ENCODE measurements at regions of chr4 and their contacts with region 1.

Region 1: GRCh38 chr4:112492321-112492720 is 23.7 kb downstream of the NEUROG2 start:
- DNase-seq: no peak
- ATAC-seq: no peak

Region 2: DNA sequence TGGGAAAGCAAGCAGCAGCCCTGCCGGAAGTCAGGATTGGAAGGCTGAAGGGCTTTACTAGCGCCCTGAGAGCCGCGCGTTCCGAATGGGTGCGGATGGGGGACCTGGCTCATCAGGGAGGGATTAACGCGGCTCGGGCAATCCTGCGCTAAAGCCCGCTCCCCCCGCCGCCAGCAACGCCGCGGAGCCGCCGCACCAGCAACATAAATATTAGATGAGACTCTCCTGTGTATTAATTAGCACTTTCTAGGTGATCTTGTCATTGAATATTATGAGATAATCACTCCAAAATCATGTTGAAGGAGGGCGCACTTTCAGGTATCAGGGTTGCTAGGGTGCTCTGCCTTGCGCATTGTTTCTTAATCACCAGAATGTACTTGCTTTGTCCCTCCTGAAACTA is 704.2 kb before region 1 on chr4:
- intact Hi-C with region 1: loop called (anchors 5 kb)
- DNase-seq: no peak
- ATAC-seq: no peak

Region 3: GRCh38 chr4:112523764-112524505 is 31.6 kb after region 1 on chr4:
- intact Hi-C with region 1: no loop called
- DNase-seq: peak; percentile 77
- ATAC-seq: peak; percentile 77

Measured in sciatic nerve (tissue), 2 donors.